ENCODE measurements at regions of chr1 and their contacts with region 1.

Region 1: DNA sequence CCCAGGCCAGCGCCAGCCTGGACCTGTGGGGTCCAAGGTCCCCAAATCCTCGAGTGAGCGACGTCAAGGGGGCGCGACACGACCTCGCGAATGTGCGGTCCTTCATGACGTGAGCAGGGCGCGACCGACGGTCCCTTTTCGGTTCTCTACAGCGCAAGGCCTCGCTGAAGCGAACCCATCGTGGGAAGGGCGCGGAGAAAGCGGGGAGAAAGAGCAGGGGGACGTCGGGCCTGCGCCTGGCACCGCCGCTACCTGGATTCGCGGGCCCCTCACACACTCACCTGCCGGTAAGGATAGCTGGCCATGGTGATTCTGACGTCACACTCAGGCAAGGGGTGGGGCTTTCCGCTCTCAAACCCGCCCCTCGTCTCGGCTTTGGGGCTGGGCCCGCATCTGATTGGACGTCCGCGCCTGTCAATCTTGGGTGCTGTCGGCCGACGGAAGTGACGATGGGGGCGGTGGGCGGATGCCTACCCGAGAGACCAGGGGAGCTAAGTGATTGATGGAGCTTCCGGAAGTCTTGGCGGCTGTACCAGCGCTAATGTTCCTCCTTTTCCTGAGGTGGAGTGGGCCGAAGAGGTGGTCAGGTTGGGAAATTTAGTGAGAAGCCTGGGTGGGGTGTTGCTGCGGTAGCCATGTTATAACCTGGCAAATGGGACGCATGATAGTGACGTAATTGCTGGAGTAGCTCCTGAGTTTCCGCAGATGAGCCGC is at the start of gene PEF1:
- DNase-seq: peak; percentile 99
- ATAC-seq: peak; percentile 80
- H3K4me3 Mint-ChIP-seq: peak within 1 kb of the TSS; percentile 94
- H3K27ac Mint-ChIP-seq: peak within 1 kb of the TSS; percentile 100
- H3K4me1 Mint-ChIP-seq: peaks cover 19% of the 10 kb centered on the region
- H3K27me3 Mint-ChIP-seq: no peaks in the 10 kb centered on the region; the same call in 1 of the 2 replicates
- CTCF ChIP-seq: no peak
- total RNA-seq, gene PEF1: 33.7 to 37.0 TPM (median 35.5 TPM) in 3 replicates

Region 2: DNA sequence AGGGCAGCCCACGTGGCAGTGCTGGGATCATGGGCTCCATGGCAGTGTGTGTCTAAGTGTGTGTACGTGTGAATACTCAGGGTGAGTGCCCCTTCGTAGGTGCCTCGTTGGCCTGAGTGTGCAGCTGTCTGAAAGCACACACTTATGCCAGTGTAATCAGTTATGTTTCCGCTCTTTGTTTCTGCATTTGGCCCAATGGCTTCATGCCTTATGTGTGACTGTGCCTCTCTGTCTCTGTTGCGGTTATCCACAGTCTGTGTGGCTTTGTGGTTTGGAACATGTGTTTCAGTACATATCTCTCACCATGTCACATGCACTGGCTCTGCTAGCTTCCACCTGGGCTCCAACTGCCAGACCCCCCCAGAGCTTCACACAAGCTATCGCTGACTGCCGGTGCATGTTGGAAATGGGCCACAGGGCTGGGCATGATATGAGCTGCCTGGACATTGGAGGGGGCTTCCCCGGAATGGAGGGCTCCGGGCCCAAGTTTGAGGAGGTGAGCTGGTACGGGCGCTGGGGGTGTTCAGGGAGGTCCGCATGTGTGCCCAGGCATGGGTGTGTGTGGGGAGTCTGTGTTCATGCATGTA is 138.7 kb before region 1 on chr1:
- CTCF ChIA-PET with region 1: no interaction called
- POLR2A ChIA-PET with region 1: no interaction called
- DNase-seq: no peak
- ATAC-seq: no peak
- H3K4me3 Mint-ChIP-seq: no peak overlapping the region
- H3K27ac Mint-ChIP-seq: no peak overlapping the region
- H3K4me1 Mint-ChIP-seq: peaks cover 40% of the 10 kb centered on the region
- H3K27me3 Mint-ChIP-seq: peaks cover 4% of the 10 kb centered on the region; the same call in 1 of the 2 replicates
- CTCF ChIP-seq: no peak

Region 3: DNA sequence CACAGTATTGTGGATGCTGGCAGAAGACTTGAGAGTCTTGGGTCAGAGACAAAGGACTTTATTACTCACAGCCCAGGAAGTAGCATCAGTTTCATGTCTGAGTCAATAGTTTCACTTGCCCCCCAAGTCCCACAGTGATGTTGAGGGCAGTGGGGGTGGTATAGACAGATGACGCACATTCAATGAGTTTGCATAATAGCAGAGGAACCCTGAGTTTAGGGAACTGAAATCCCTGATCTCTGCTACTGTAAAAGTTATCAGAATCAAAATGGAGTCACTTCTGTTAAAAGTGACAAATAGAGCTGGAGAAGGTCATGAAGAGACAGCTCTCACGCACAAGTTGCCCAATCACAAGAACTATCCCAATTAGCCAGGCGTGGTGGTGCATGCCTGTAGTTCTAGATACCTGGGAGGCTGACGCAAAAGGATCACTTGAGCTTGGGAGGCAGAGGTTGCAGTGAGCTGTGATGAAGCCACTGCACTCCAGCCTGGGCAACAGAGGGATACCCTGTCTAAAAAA is 38.7 kb before region 1 on chr1:
- CTCF ChIA-PET with region 1: no interaction called
- POLR2A ChIA-PET with region 1: no interaction called
- DNase-seq: no peak
- ATAC-seq: no peak
- H3K4me3 Mint-ChIP-seq: no peak overlapping the region
- H3K27ac Mint-ChIP-seq: no peak overlapping the region
- H3K4me1 Mint-ChIP-seq: 0 out of 2 replicates have a peak, but pooled peaks cover 3% of the 10 kb centered on the region
- H3K27me3 Mint-ChIP-seq: no peaks in the 10 kb centered on the region
- CTCF ChIP-seq: no peak

Region 4: DNA sequence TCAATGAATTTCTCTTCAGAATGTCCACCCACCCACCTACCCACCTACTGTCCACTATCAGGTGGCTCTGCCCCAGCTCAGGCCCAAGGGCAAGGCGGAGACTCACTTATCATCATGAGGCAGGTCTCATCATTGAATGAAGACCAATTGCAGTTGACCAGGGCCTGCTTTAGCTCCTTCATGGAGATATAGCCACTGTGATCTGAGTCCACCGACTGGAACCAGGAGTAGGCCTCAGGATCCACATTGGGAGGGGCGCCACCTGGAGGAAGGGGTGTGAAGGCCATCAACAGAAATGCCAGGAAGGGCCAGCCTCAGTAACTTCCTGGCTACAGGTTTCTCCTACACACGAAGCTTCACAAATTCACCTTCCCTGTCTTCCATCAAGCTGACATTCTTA is 11.7 kb before region 1 on chr1:
- CTCF ChIA-PET with region 1: interaction called, 31 read pairs
- POLR2A ChIA-PET with region 1: no interaction called
- DNase-seq: peak; percentile 75
- ATAC-seq: peak; percentile 86
- H3K4me3 Mint-ChIP-seq: no peak overlapping the region
- H3K27ac Mint-ChIP-seq: peak overlapping the region; percentile 76; the same call in 1 of the 2 replicates
- H3K4me1 Mint-ChIP-seq: no peaks in the 10 kb centered on the region
- H3K27me3 Mint-ChIP-seq: no peaks in the 10 kb centered on the region
- CTCF ChIP-seq: peak; percentile 54; the same call in 1 of the 2 replicates

Region 5: GRCh38 chr1:31663622-31664452 is 19.1 kb after region 1 on chr1:
- CTCF ChIA-PET with region 1: interaction called, 11 read pairs
- POLR2A ChIA-PET with region 1: interaction called, 3 read pairs
- DNase-seq: peak; percentile 89
- ATAC-seq: peak; percentile 83
- H3K4me3 Mint-ChIP-seq: no peak overlapping the region
- H3K27ac Mint-ChIP-seq: no peak overlapping the region
- H3K4me1 Mint-ChIP-seq: peaks cover 3% of the 10 kb centered on the region
- H3K27me3 Mint-ChIP-seq: no peaks in the 10 kb centered on the region
- CTCF ChIP-seq: peak; percentile 91

Region 6: GRCh38 chr1:31669786-31670592 is 25.3 kb after region 1 on chr1:
- CTCF ChIA-PET with region 1: interaction called, 11 read pairs
- POLR2A ChIA-PET with region 1: interaction called, 3 read pairs
- DNase-seq: no peak
- ATAC-seq: peak; percentile 59
- H3K4me3 Mint-ChIP-seq: peak overlapping the region; percentile 18; the same call in 1 of the 2 replicates
- H3K27ac Mint-ChIP-seq: 0 out of 2 replicates have a peak overlapping the region, but pooled peaks have one; percentile 16
- H3K4me1 Mint-ChIP-seq: peaks cover 19% of the 10 kb centered on the region
- H3K27me3 Mint-ChIP-seq: no peaks in the 10 kb centered on the region
- CTCF ChIP-seq: no peak

Region 7: DNA sequence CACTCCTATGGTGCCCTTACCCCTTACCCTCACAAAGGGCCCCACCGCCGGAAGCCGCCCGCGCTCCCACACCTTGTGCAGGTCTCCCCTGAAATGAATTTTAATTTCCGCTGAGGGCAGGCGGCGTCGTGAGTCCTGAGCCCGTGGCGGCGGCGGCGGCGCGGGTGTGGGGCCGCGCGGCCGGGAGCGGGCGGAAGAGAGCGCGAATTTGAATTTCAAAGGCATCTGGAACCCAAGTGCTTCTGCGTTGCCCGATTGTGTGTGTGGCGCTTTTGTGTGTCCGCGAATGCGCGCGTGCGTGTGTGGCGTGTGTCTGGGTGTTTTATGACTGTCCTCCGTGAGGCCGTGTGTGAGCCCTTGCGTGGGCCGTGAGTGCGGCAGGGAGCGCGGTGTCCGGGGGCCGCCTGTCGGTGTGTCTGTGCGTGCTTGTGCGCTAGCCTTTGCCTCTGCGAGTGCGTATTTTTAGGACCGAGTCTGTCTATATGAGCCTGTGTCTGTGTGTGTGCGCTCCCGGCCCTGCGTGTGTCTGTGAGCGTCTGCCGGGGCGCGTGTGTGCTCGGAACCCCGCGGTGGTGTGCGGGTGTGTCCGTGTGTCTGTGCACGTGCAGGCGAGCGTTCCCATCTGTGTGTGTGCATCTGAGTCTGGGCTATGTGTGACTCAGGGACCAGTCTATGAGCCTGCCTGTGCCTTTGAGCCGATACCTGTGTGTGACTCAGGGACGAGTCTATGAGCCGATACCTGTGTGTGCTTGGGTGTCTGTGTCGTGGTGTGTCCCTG is 127.4 kb after region 1 on chr1:
- CTCF ChIA-PET with region 1: no interaction called
- POLR2A ChIA-PET with region 1: no interaction called
- DNase-seq: no peak
- ATAC-seq: peak; percentile 38
- H3K4me3 Mint-ChIP-seq: peak overlapping the region; percentile 73
- H3K27ac Mint-ChIP-seq: peak overlapping the region; percentile 49; the same call in 1 of the 2 replicates
- H3K4me1 Mint-ChIP-seq: peaks cover 45% of the 10 kb centered on the region
- H3K27me3 Mint-ChIP-seq: peaks cover 56% of the 10 kb centered on the region
- CTCF ChIP-seq: no peak

Measured in WTC11 (cell line).